MCF 10A (cell line): ENCODE measurements at regions of chr5 and their contacts with region 1.

Region 1: DNA sequence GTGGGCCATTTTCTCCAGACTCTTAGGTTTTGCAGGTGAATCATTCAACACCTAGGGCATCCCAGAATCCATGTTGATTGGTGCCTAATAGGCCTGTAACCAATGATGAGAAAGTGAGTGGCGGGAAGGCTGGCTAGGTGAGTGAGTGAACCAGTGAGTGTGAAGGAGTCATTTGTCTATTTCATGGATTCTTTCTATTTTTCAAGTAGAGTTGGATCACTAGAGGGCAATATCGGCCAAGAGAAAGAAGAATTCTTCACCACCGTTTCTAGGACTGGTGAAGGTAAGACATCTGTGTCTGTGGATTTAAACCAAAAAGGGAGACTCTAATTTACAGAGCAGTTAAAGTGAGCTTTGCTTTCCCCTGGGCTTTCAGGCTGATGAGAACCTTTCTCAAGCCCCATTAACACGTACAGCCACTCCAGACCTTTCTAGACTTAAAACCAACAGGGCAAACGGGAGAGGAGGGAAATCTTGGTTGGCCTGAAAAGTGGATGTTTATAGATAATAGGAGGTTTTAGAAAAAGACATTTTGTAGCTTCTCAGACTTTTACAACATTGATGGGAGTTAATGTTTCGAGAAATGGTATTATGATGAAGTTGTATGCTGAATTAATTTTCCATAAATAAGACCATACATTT is 114.3 kb upstream of the IL12B start:
- DNase-seq: peak; percentile 78
- H3K4me3 Mint-ChIP-seq: no peak overlapping the region
- H3K27ac Mint-ChIP-seq: no peak overlapping the region
- H3K4me1 Mint-ChIP-seq: peaks cover 11% of the 10 kb centered on the region
- H3K27me3 Mint-ChIP-seq: no peaks in the 10 kb centered on the region
- CTCF ChIP-seq: peak; percentile 84

Region 2: GRCh38 chr5:159331093-159331973 is 113.2 kb before region 1 on chr5:
- CTCF ChIA-PET with region 1: interaction called, 5 read pairs
- POLR2A ChIA-PET with region 1: no interaction called
- intact Hi-C with region 1: loop called (anchors 5 kb)
- DNase-seq: peak; percentile 49
- H3K4me3 Mint-ChIP-seq: peak overlapping the region; percentile 73
- H3K27ac Mint-ChIP-seq: peak overlapping the region; percentile 80
- H3K4me1 Mint-ChIP-seq: peaks cover 30% of the 10 kb centered on the region
- H3K27me3 Mint-ChIP-seq: no peaks in the 10 kb centered on the region
- CTCF ChIP-seq: peak; percentile 80

Region 3: DNA sequence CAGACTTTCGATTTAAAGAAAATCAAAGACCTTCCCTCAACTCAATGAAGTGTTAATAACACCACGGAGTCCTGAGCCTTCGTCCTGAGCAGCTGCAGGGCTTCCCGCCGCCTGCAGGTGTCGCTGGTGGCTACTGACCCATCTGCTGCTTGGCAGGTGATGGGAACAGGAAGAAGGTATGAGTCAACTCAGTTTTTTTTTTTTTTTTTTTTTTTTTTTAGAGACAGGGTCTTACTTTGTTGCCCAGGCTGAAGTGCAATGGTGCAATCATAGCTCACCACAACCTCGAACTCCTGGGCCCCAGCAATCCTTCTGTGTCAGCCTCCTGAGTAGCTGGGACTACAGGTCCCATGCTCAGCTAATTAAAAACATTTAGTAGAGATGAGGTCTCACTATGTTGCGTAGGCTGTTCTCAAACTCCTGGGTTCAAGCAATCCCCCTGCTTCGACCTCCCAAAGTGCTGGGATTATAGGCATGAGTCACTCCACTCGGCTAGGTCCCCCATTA is 71.4 kb after region 1 on chr5:
- CTCF ChIA-PET with region 1: interaction called, 13 read pairs
- POLR2A ChIA-PET with region 1: interaction called, 3 read pairs
- intact Hi-C with region 1: loop called (anchors 2 kb)
- DNase-seq: peak; percentile 88
- H3K4me3 Mint-ChIP-seq: no peak overlapping the region
- H3K27ac Mint-ChIP-seq: no peak overlapping the region
- H3K4me1 Mint-ChIP-seq: peaks cover 19% of the 10 kb centered on the region
- H3K27me3 Mint-ChIP-seq: no peaks in the 10 kb centered on the region
- CTCF ChIP-seq: peak; percentile 97

Region 4: DNA sequence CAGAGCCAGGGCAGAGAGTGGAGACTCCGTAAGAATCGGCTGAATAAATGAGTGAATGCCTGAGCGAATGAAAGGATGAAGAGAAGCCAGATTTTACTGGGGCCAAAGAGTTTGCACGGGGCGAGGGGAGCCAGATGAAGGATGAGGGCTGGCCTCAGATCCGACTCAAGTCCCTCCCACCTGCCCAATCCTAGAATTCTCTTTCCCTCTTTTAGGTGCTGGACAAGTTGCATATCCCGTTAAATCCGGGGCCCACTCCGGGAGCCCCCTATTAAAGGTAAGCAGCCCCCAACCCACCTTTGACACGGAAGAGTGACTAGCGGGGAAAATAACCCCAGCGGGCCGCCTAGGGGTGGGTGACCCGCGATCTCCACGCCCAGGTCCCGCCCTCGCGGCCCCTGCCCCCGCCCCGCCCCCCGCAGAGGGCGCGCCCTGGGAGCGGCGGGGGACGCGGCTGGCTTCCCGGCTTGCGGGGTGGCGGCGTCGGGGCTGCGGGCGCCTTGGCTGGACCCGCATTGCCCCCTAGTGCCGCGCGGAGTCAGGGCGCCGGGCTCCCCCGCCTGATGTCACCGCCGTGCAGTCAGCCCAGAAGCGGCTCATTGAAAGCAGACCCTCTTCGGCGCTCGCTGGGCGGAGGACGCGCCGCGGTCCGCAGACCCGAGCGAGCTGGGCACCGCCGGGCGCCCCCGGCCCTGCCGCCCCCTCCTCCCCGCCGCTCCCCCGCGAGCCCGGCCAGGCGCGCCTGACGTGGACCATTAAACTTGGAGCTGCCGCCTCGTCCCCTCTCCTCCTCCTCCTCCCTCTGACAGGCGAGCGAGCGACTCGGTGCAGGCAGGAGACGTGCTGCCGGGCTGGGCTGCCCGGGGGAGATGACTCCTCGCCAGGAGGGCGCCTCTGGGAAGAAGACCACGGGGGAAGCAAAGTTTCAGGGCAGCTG is 471.6 kb after region 1 on chr5 and contains the start of gene ADRA1B:
- CTCF ChIA-PET with region 1: interaction called, 22 read pairs
- POLR2A ChIA-PET with region 1: no interaction called
- intact Hi-C with region 1: loop called (anchors 1 kb)
- DNase-seq: peak; percentile 55
- H3K4me3 Mint-ChIP-seq: peak within 1 kb of the TSS; percentile 44
- H3K27ac Mint-ChIP-seq: peak within 1 kb of the TSS; percentile 28
- H3K4me1 Mint-ChIP-seq: peaks cover 44% of the 10 kb centered on the region
- H3K27me3 Mint-ChIP-seq: no peaks in the 10 kb centered on the region
- CTCF ChIP-seq: peak; percentile 63
- total RNA-seq, gene ADRA1B: 0.14 TPM in 1 of 2 replicates, not detected in the other

Region 5: DNA sequence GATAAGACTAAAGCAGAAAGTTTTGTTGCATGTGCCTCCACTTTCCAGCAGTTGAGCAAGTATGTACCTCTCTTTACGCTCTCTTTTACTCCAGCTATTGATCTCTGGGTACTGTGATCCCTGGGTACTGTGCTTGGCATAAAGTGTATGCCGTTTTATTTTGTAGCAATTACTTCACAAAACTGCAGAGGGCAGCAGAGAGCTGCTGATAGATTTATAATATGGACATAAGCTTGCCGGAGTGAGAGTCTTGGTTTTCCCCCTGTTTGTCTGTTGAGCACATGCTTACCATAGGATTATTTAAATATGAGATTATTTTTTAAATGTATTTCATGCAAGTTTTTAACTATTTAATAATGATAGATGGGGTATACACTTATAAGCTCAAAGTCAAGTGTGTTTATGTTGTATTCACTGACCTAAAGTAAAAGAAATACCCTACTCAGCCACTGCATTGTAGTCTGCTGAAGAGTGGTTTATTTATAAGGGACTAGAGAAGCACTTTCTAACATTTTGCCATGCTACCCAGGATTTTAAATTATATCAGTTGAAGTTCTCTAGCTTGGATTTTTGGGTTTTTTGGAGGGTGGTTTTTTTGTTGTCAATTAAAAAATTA is 577.4 kb after region 1 on chr5:
- CTCF ChIA-PET with region 1: interaction called, 16 read pairs
- POLR2A ChIA-PET with region 1: no interaction called
- intact Hi-C with region 1: no loop called
- DNase-seq: peak; percentile 81
- H3K4me3 Mint-ChIP-seq: no peak overlapping the region
- H3K27ac Mint-ChIP-seq: no peak overlapping the region
- H3K4me1 Mint-ChIP-seq: peaks cover 13% of the 10 kb centered on the region
- H3K27me3 Mint-ChIP-seq: no peaks in the 10 kb centered on the region
- CTCF ChIP-seq: peak; percentile 82